GM18951 (cell line): ENCODE measurements at regions of chr3 and their contacts with region 1.

Region 1: DNA sequence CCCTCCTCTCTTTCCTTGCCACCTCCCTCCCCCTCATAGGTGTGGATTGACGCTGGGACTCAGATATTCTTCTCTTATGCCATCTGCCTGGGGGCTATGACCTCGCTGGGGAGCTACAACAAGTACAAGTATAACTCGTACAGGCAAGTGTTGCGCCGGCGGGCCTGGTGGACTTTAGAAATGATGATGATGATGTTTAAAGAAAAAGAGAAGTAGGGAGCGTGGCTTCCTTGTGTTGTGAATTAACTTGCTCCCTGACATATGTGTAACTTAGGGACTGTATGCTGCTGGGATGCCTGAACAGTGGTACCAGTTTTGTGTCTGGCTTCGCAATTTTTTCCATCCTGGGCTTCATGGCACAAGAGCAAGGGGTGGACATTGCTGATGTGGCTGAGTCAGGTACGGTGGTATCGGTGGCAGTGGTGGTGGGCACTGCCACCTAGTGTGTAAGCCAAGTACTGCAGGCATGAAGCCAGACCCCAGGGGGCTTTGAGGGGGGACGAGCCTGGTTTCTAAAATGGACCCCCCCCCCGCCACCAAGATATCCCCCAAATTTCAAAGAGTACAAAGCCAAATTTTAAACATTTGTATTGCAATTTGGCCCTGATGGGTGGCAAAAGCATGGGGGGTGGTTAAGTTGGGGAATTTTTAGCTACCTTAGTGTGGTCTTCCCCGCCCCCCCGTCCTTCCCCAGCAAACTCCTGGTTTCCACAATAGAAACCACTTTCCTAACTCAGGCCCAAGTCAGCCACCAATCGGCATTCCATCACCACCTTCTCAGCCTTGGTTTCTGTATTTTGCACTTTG is 65.6 kb downstream of the SLC6A6 start:
- POLR2A ChIP-seq: no peak

Region 2: DNA sequence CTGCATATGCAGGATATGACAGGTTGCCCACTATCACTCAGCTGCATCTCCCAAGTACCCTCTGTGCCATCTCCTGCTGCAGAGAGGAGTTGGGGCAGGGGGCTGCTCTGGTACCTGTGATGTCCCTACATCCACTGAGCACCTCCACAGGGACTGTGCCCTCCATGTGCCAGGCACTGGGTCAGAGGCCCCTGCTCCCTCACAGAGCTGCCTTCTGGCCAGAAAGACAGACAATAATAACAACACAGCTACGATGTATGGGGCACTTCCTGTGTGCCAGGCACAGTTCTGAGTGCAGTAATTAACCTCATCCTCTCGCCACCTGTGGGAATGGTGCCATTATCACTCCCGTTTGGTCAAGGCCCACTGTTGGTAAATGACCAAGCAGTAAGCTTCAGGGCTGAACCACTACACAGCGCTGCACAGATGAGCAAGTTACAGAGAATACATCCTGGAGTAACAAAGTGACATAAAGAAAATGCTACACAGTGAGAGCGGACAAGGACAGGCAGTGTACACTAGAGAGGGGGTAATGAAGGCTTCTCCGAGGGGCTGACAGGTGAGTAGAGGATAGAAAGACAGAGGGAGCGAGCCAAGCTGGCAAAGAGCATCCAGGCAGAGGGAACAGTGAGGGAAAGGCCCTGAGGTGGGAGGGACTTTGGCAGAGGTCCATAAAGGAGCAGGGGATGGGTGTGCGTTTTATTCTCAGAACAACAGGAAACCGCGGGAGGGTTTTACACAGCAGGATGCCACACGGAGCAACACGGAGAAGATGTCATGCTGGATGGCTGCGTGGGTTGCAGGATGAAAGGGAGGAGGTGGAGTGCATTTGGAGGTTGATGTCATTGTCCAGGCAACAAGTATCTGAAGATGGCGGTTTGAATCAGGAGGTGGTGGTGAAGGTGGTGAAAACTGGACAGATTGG is 601.7 kb before region 1 on chr3:
- in situ Hi-C with region 1: no loop called
- POLR2A ChIP-seq: no peak

Region 3: GRCh38 chr3:14261229-14261628 is 206.8 kb before region 1 on chr3:
- in situ Hi-C with region 1: loop called (anchors 5 kb)
- POLR2A ChIP-seq: no peak

Region 4: DNA sequence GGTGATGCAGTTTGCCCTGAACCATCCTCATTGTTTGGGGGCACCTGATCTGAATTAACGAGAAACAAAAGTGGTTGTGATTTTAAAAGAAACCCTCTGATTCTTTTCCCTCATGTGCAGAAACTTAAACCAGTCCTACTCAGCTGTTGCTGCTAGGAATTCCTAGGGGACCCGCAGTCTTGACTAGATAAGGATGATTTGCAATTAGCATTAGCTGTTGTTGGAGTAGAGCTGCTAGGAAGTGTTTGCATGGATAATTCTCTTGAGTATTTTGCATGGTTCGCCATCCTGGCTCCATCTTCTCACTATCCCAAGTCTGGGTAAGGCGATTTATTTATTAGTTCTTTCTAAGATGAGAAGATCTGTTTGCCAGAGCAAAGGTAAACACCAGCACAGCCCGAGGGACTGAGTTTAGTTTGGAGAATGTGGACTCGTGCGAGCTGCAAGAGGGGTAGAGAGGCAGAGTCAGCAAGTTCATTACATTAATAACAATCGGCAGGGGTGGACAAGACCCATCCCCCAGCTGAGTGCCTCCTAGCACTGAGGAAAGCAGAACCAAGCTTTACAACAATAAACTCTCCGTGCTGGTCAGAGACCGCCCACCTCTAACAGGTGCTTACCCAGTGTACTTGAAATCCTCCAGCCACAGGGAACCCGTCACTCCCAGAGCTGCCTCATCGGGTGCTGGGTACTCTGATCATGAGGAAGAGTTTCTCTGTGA is 354.8 kb after region 1 on chr3:
- in situ Hi-C with region 1: no loop called
- POLR2A ChIP-seq: no peak